ENCODE measurements at regions of chr12 and their contacts with region 1.

Region 1: GRCh38 chr12:120012067-120012621 is 23.1 kb downstream of the BICDL1 start:
- DNase-seq: no peak
- ATAC-seq: peak; percentile 81
- H3K4me3 Mint-ChIP-seq: peak overlapping the region; percentile 57
- H3K27ac Mint-ChIP-seq: peak overlapping the region; percentile 87
- H3K4me1 Mint-ChIP-seq: peaks cover 56% of the 10 kb centered on the region
- H3K27me3 Mint-ChIP-seq: no peaks in the 10 kb centered on the region
- CTCF ChIP-seq: no peak

Region 2: GRCh38 chr12:119988782-119989668 is 23.1 kb before region 1 on chr12 and contains the start of gene BICDL1:
- CTCF ChIA-PET with region 1: interaction called, 4 read pairs
- POLR2A ChIA-PET with region 1: interaction called, 12 read pairs
- intact Hi-C with region 1: loop called (anchors 1 kb)
- DNase-seq: peak; percentile 96
- ATAC-seq: peak; percentile 83
- H3K4me3 Mint-ChIP-seq: peak within 1 kb of the TSS; percentile 83
- H3K27ac Mint-ChIP-seq: peak within 1 kb of the TSS; percentile 85
- H3K4me1 Mint-ChIP-seq: peaks cover 23% of the 10 kb centered on the region
- H3K27me3 Mint-ChIP-seq: no peaks in the 10 kb centered on the region
- CTCF ChIP-seq: no peak
- total RNA-seq, gene BICDL1: 15.1 and 16.8 TPM in 2 replicates

Region 3: DNA sequence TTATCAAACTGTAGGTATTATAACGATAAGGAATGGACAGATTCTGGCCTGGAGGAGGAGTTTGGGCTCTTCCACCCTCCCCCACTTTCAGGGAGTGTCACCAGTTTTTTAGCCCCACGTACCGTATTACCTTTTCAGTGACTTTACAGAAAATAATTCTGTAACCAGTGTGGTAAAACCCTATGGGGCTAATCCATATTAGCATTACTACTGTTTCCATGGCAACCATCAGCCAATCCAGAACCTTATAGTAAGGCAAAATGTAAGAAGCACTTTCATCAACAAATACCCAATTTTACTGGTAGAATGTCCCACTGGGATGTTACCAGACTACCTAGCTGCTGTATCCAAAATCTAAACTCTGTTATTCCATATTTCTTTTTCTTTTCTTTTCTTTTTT is 27.6 kb after region 1 on chr12:
- CTCF ChIA-PET with region 1: no interaction called
- POLR2A ChIA-PET with region 1: interaction called, 14 read pairs
- intact Hi-C with region 1: no loop called
- DNase-seq: no peak
- ATAC-seq: no peak
- H3K4me3 Mint-ChIP-seq: no peak overlapping the region
- H3K27ac Mint-ChIP-seq: no peak overlapping the region
- H3K4me1 Mint-ChIP-seq: no peaks in the 10 kb centered on the region
- H3K27me3 Mint-ChIP-seq: no peaks in the 10 kb centered on the region
- CTCF ChIP-seq: no peak